ENCODE measurements at regions of chr4 and their contacts with region 1.

Region 1: DNA sequence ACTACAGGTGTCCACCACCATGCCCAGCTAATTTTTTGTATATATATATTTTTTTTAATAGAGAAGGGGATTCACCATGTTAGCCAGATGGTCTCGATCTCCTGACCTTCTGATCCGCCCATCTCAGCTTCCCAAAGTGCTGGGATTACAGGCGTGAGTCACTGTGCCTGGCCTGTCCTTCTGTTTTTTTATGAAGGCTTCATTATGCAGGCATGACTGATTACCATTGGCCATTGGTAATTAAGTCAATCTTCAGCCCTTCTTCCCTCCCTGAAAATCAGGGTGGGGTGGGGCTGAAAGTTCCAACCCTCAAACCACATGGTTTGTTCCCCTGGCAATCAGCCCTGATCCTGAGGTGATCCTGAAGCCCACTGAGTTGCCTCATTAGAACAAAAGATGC is 336.9 kb downstream of the PTTG2 start:
- H3K4me3 Mint-ChIP-seq: no peak overlapping the region
- H3K27ac Mint-ChIP-seq: no peak overlapping the region
- H3K4me1 Mint-ChIP-seq: no peaks in the 10 kb centered on the region
- H3K27me3 Mint-ChIP-seq: peaks cover 2% of the 10 kb centered on the region

Region 2: GRCh38 chr4:38141808-38142500 is 155.1 kb before region 1 on chr4:
- intact Hi-C with region 1: no loop called
- H3K4me3 Mint-ChIP-seq: no peak overlapping the region
- H3K27ac Mint-ChIP-seq: no peak overlapping the region
- H3K4me1 Mint-ChIP-seq: peaks cover 15% of the 10 kb centered on the region
- H3K27me3 Mint-ChIP-seq: no peaks in the 10 kb centered on the region

Region 3: GRCh38 chr4:38360201-38360600 is 63.1 kb after region 1 on chr4:
- intact Hi-C with region 1: loop called (anchors 2 kb)
- H3K4me3 Mint-ChIP-seq: no peak overlapping the region
- H3K27ac Mint-ChIP-seq: no peak overlapping the region
- H3K4me1 Mint-ChIP-seq: no peaks in the 10 kb centered on the region
- H3K27me3 Mint-ChIP-seq: peaks cover 1% of the 10 kb centered on the region

Region 4: DNA sequence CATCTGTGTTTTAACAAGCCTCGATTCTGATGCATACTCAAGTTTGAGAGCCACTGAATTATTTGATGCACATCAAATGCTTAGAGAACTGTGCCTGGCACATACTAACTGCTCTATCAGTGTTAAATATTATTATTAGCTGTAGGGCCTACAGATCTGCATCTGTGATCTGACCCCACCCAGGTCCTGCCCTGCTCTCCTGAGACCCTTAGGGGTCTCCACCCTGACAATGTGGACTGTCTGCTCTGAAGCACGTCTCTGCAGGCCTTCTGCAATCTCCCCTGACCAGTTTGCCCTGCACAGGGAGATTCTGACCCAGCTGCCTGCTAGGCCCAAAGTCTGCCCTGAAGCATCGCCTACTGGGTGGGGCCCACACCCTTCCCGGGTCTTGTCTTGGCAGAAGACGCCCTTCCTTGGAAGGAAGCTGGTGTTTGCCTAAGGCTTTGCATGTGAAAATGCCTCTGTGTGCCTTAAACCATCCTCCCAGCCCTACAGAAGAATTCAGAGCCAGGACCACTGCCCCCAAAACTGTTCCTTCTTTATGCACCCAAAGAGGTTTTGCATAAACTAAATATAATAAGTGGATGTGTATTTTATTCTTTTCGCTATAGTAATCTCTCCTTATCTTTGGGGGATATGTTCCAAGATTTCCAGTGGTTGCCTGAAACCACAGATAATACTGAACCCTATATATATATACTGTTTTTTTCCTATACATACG is 165.6 kb after region 1 on chr4:
- intact Hi-C with region 1: no loop called
- H3K4me3 Mint-ChIP-seq: no peak overlapping the region
- H3K27ac Mint-ChIP-seq: no peak overlapping the region
- H3K4me1 Mint-ChIP-seq: peaks cover 6% of the 10 kb centered on the region
- H3K27me3 Mint-ChIP-seq: no peaks in the 10 kb centered on the region